IMR-90 (cell line): ENCODE measurements at regions of chr15 and their contacts with region 1.

Region 1: DNA sequence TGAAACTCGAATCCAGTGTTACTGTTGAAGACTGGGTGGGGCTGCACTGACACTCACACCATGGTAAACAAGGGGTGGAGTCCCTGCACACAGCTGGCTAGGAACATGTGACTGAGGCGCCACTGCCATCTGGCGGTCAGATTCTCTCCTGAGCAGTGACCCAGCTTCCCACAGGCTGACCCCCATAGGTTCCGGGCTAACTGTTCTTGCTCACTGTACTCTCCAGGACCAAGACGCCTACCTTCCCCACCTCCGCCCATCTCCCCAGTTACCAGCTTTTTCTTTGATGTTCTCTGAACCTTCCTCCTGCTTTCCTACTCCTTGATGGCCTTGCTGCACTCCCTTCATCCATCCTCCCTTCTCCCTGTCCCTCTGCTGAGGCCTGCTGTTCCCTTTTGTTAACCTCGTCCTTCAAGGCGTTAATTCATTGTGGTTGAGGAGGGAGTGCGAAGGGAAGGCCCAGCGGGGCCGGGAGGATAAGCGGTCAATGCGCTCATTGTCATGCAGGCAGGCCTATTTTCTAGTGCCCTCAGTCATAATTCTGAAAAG is 115.2 kb downstream of the ATP8B4 start:
- DNase-seq: peak; percentile 87
- ATAC-seq: peak; percentile 98
- H3K4me3 ChIP-seq: no peak overlapping the region
- H3K27ac ChIP-seq: peak overlapping the region; percentile 70
- H3K4me1 ChIP-seq: peaks cover 11% of the 10 kb centered on the region
- H3K27me3 ChIP-seq: no peaks in the 10 kb centered on the region
- CTCF ChIP-seq: peak; percentile 88
- POLR2A ChIP-seq: no peak
- RAD21 ChIP-seq: peak; percentile 87

Region 2: DNA sequence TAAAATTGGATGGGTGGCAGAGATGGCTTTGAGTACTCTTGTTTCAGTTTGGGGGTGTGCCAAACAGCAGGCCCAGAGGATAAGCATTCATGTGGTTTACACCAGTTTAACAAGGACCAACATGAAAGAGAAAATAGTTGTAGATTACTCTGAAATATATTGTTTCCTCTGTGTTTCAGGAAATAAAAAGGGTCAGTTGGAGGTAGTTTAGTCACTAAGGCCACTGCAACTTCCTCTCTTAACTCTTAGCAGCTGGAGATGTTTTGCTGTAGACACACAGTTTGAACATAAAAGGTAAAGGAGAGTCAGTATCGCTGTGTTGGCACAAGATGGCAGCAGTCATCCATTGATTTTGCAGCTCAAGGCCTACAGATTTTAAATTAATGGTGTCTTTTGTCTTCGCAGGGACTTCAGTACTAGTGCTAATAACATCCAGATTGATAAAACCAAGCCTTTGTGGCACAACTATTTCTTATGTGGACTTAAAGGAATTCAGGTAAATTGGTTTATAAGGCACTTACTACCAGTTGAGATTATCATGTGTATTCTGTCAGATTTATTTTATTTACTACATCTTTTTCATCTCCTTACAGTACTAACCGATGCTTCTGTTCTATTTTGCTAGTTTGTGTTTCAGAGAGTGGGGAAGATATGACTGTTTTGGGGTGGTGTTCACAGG is 768.3 kb before region 1 on chr15:
- CTCF ChIA-PET with region 1: interaction called, 6 read pairs
- POLR2A ChIA-PET with region 1: no interaction called
- dilution Hi-C with region 1: no loop called
- in situ Hi-C with region 1: no loop called
- intact Hi-C with region 1: loop called (anchors 1 kb)
- DNase-seq: peak; percentile 92
- ATAC-seq: peak; percentile 88
- H3K4me3 ChIP-seq: no peak overlapping the region
- H3K27ac ChIP-seq: peak overlapping the region; percentile 70; the same call in 1 of the 2 replicates
- H3K4me1 ChIP-seq: peaks cover 3% of the 10 kb centered on the region
- H3K27me3 ChIP-seq: no peaks in the 10 kb centered on the region
- CTCF ChIP-seq: peak; percentile 91
- POLR2A ChIP-seq: no peak
- RAD21 ChIP-seq: peak; percentile 94

Region 3: DNA sequence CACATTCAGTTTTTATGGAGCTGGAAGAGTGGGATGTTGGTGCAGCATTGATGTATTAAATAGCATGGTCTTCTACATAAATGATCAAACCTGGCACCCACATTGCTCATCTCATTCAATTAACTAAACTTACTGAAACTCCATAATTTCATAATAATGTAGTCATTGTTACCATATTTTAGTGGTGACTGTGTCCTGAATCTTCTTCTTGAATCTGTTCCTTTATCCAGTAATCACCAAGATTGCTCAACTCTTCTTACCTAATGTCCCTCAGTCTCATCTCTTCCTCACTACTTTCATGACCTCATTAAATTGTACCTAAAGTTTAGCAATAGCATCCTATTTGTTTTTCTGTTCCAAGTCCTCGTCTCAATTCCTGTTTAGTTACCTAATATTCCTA is 511.0 kb before region 1 on chr15:
- CTCF ChIA-PET with region 1: no interaction called
- POLR2A ChIA-PET with region 1: no interaction called
- dilution Hi-C with region 1: no loop called
- in situ Hi-C with region 1: no loop called
- intact Hi-C with region 1: loop called (anchors 2 kb)
- DNase-seq: peak; percentile 90
- ATAC-seq: no peak
- H3K4me3 ChIP-seq: no peak overlapping the region
- H3K27ac ChIP-seq: no peak overlapping the region
- H3K4me1 ChIP-seq: peaks cover 14% of the 10 kb centered on the region
- H3K27me3 ChIP-seq: no peaks in the 10 kb centered on the region
- CTCF ChIP-seq: no peak
- POLR2A ChIP-seq: no peak
- RAD21 ChIP-seq: no peak

Region 4: GRCh38 chr15:49901996-49902684 is 101.7 kb before region 1 on chr15:
- CTCF ChIA-PET with region 1: interaction called, 14 read pairs
- POLR2A ChIA-PET with region 1: no interaction called
- dilution Hi-C with region 1: no loop called
- in situ Hi-C with region 1: no loop called
- intact Hi-C with region 1: loop called (anchors 1 kb)
- DNase-seq: peak; percentile 65
- ATAC-seq: peak; percentile 65
- H3K4me3 ChIP-seq: no peak overlapping the region
- H3K27ac ChIP-seq: peak overlapping the region; percentile 98
- H3K4me1 ChIP-seq: peaks cover 24% of the 10 kb centered on the region
- H3K27me3 ChIP-seq: no peaks in the 10 kb centered on the region
- CTCF ChIP-seq: peak; percentile 66
- POLR2A ChIP-seq: no peak
- RAD21 ChIP-seq: peak; percentile 65

Region 5: GRCh38 chr15:50321680-50322210 is 317.9 kb after region 1 on chr15:
- CTCF ChIA-PET with region 1: no interaction called
- POLR2A ChIA-PET with region 1: no interaction called
- dilution Hi-C with region 1: no loop called
- in situ Hi-C with region 1: no loop called
- intact Hi-C with region 1: loop called (anchors 2 kb)
- DNase-seq: peak; percentile 25
- ATAC-seq: peak; percentile 68
- H3K4me3 ChIP-seq: no peak overlapping the region
- H3K27ac ChIP-seq: peak overlapping the region; percentile 49; the same call in 1 of the 2 replicates
- H3K4me1 ChIP-seq: peaks cover 6% of the 10 kb centered on the region
- H3K27me3 ChIP-seq: no peaks in the 10 kb centered on the region
- CTCF ChIP-seq: no peak
- POLR2A ChIP-seq: no peak
- RAD21 ChIP-seq: no peak